Activated naive CD4-positive, alpha-beta T cell treated with anti-CD3 and anti-CD28 coated beads for 36 hours (primary cell): ENCODE measurements at regions of chr3 and their contacts with region 1.

Region 1: DNA sequence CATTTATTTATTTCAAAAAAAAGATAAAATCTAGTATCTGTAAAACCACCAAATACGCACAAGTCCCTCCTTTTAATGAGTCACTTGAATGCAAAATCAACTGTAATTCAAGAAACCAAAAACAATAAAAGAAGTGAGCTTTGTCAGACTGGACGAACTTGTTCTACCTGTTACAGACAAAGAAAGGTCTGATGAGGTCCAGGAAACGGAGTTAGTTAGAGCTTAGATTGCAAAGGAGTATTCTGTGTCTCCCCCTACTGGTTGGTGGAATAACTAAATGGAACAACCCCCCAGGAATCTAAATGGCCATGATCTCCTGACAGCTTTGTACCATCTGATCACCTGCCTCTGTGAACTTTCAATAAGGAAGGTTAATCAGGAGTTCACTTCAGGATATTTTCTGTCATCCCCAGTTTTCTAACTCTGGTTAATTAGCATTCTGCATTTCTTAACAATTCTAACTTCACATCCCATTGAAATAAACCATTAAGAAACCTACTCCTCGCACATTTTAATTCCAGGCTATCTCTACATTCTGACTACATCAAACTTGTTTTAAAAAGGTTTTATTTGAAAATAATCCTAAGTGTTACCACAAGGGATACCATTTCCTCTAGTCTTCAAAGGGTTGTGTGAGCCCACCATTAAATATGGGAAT is 333.0 kb upstream of the SATB1 start:
- DNase-seq: peak; percentile 38
- H3K4me3 Mint-ChIP-seq: no peak overlapping the region
- H3K27ac Mint-ChIP-seq: peak overlapping the region; percentile 57
- H3K4me1 Mint-ChIP-seq: peaks cover 43% of the 10 kb centered on the region
- H3K27me3 Mint-ChIP-seq: no peaks in the 10 kb centered on the region

Region 2: DNA sequence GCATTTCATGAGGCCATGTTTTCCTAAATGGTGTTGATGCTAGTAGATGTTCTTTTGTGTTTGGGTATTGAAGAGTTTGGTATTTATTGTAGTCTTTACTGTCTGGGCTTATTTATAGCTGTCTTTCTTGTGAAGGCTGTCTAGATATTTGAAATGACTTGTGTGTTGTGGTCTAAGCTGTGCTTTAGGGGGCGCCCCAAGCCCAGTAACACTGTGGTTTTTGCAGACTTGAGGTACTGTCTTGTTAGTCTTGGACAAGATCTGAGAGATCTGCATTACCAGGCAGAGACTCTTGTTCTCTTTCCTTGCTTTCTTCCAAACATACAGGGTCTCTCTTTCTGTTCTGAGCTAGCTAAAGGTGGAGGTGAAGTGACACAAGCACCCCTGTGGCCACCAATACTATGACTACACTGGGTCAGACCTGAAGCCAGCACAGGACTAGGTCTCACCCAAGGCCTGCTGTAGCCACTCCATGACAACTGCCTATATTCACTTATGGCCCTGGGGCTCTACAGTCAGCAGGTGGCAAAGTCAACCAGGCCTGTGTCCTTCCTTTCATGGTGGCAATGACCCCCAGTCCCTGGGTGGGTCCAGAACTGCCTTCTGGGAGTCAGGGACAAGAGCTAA is 863.6 kb before region 1 on chr3:
- CTCF ChIA-PET with region 1: no interaction called
- intact Hi-C with region 1: loop called (anchors 2 kb)
- DNase-seq: peak; percentile 69
- H3K4me3 Mint-ChIP-seq: no peak overlapping the region
- H3K27ac Mint-ChIP-seq: no peak overlapping the region
- H3K4me1 Mint-ChIP-seq: no peaks in the 10 kb centered on the region
- H3K27me3 Mint-ChIP-seq: no peaks in the 10 kb centered on the region

Region 3: GRCh38 chr3:18237251-18238005 is 520.7 kb before region 1 on chr3:
- CTCF ChIA-PET with region 1: no interaction called
- intact Hi-C with region 1: loop called (anchors 10 kb)
- DNase-seq: peak; percentile 15
- H3K4me3 Mint-ChIP-seq: no peak overlapping the region
- H3K27ac Mint-ChIP-seq: no peak overlapping the region
- H3K4me1 Mint-ChIP-seq: no peaks in the 10 kb centered on the region
- H3K27me3 Mint-ChIP-seq: peaks cover 12% of the 10 kb centered on the region

Region 4: GRCh38 chr3:18401300-18401961 is 356.7 kb before region 1 on chr3:
- CTCF ChIA-PET with region 1: interaction called, 10 read pairs
- intact Hi-C with region 1: no loop called
- DNase-seq: no peak
- H3K4me3 Mint-ChIP-seq: peak overlapping the region; percentile 49
- H3K27ac Mint-ChIP-seq: peak overlapping the region; percentile 87
- H3K4me1 Mint-ChIP-seq: peaks cover 96% of the 10 kb centered on the region
- H3K27me3 Mint-ChIP-seq: no peaks in the 10 kb centered on the region

Region 5: GRCh38 chr3:18649666-18650363 is 108.4 kb before region 1 on chr3:
- CTCF ChIA-PET with region 1: interaction called, 6 read pairs
- intact Hi-C with region 1: loop called (anchors 1 kb)
- DNase-seq: peak; percentile 87
- H3K4me3 Mint-ChIP-seq: no peak overlapping the region
- H3K27ac Mint-ChIP-seq: peak overlapping the region; percentile 92
- H3K4me1 Mint-ChIP-seq: peaks cover 74% of the 10 kb centered on the region
- H3K27me3 Mint-ChIP-seq: no peaks in the 10 kb centered on the region

Region 6: DNA sequence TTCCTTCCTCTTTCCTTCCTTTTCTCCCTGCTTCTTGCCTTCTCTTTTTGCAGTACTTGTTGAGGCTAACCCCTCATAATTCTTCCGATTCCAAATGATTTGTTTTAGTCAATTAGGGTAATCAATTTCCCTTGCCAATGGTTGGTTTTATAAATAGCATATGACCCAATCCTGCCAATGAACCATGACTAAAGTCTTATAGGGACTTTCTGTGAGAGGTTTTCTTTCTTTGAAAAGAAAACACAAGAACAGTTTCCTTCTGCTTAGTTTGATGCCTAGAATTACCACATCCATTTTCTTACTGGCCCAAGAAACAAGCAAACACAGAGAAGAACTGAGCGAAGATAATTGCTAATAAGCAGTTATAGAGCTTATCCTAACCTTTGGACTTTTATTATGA is 40.6 kb before region 1 on chr3:
- CTCF ChIA-PET with region 1: interaction called, 4 read pairs
- intact Hi-C with region 1: loop called (anchors 1 kb)
- DNase-seq: no peak
- H3K4me3 Mint-ChIP-seq: no peak overlapping the region
- H3K27ac Mint-ChIP-seq: peak overlapping the region; percentile 84
- H3K4me1 Mint-ChIP-seq: peaks cover 71% of the 10 kb centered on the region
- H3K27me3 Mint-ChIP-seq: no peaks in the 10 kb centered on the region